Vagina (tissue), 2 donors: ENCODE measurements at regions of chr4 and their contacts with region 1.

Region 1: DNA sequence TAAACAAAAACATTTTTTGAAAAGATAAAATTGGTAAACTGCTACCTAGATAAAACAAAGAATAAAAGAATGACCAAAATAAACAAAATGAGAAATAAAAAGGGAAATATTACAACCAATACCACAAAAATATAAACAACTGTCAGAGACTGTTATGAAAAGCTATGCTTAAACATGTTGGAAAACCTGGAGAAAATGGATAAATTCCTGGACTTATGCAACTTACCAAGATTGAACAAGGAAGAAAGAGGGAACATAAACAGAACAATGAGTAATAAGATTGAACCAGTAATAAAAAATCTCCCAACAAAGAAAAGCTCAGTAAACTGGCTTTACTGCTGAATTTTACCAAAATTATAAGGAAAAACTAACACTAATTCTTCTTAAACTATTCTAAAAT is 518.7 kb downstream of the GRXCR1 start:
- DNase-seq: no peak
- H3K4me3 ChIP-seq: no peak overlapping the region
- H3K27ac ChIP-seq: no peak overlapping the region
- H3K4me1 ChIP-seq: no peaks in the 10 kb centered on the region
- H3K27me3 ChIP-seq: no peaks in the 10 kb centered on the region
- CTCF ChIP-seq: no peak
- POLR2A ChIP-seq: no peak

Region 2: DNA sequence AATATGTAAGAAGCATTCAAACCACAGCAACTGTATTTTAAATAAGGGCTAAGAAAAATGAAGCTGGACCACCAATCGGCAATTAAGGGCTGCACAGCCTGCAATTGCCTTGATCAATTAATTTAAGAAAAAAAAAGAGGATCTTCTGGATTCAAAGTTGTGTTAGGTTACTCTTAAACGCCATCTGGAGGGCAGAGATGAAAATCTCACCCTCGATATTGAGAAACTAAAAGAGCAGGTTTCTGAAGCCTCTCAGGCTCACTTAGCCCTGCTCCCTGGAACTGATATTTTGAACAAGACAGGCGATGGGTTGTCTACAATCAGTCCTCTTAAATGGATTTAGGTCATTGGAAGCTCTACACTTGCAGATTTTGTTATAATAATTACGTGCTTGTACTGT is 60.7 kb after region 1 on chr4:
- intact Hi-C with region 1: loop called (anchors 10 kb)
- DNase-seq: no peak
- H3K4me3 ChIP-seq: no peak overlapping the region
- H3K27ac ChIP-seq: no peak overlapping the region
- H3K4me1 ChIP-seq: no peaks in the 10 kb centered on the region
- H3K27me3 ChIP-seq: no peaks in the 10 kb centered on the region
- CTCF ChIP-seq: no peak
- POLR2A ChIP-seq: no peak